Activated CD4-positive, alpha-beta T cell treated with anti-CD3 and anti-CD28 coated beads for 36 hours (primary cell): ENCODE measurements at regions of chr9 and their contacts with region 1.

Region 1: GRCh38 chr9:5628530-5629311 is at the start of gene RIC1:
- DNase-seq: peak; percentile 94
- ATAC-seq: peak; percentile 81
- H3K4me3 Mint-ChIP-seq: peak within 1 kb of the TSS; percentile 96
- H3K27ac Mint-ChIP-seq: peak within 1 kb of the TSS; percentile 99
- H3K4me1 Mint-ChIP-seq: peaks cover 61% of the 10 kb centered on the region
- H3K27me3 Mint-ChIP-seq: no peaks in the 10 kb centered on the region
- total RNA-seq, gene RIC1: 13.6 to 17.1 TPM

Region 2: DNA sequence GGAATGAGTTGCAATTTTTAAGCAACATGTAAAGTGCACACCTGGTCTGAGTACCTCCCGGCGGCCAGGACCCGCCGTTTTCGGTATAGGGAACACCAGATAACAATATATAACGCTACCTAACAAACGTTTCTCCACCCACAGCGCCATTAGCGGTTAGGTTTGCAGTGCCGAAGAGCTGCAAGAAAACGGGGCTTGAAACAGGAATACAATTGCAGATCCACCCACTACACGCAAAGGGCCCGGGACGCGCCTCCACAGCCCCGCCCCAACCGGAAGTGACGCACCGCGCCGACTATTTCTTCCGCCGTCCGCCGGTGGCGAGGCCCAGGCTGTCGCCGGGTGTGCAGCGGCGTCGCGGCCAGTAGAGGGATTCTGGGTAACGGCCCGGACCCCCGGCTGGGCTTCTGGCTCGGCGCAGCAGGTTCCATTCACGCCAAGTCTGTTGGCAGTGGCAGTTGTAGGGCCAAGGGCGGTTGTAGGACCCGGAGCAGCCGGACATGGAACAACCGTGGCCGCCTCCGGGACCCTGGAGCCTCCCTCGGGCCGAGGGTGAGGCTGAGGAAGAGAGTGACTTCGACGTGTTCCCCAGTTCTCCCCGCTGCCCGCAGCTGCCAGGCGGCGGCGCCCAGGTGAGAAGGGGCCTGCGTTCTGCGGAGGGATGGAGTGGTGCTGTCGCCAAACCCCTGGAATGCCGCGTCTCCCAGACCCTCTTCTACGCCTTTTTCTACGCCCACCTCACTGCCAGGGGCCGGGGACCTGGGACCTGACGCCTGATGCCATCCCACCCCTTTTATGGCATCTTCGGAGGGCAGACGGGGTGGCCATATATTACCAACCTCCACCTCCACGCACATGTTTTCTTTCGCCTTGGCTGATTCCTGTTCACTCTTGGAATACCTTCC is 949.2 kb before region 1 on chr9 and contains the start of gene CDC37L1:
- CTCF ChIA-PET with region 1: no interaction called
- POLR2A ChIA-PET with region 1: no interaction called
- intact Hi-C with region 1: loop called in 1 of 2 experiments (anchors 5 kb)
- DNase-seq: peak; percentile 99
- ATAC-seq: peak; percentile 95
- H3K4me3 Mint-ChIP-seq: no peak within 1 kb of the TSS
- H3K27ac Mint-ChIP-seq: no peak within 1 kb of the TSS
- H3K4me1 Mint-ChIP-seq: peaks cover 11% of the 10 kb centered on the region
- H3K27me3 Mint-ChIP-seq: no peaks in the 10 kb centered on the region
- total RNA-seq, gene CDC37L1: 8.0 to 9.8 TPM

Region 3: GRCh38 chr9:4984621-4985385 is 643.9 kb before region 1 on chr9 and contains the start of gene JAK2:
- CTCF ChIA-PET with region 1: no interaction called
- POLR2A ChIA-PET with region 1: no interaction called
- intact Hi-C with region 1: loop called in 1 of 2 experiments (anchors 5 kb)
- DNase-seq: peak; percentile 91
- ATAC-seq: peak; percentile 84
- H3K4me3 Mint-ChIP-seq: no peak within 1 kb of the TSS
- H3K27ac Mint-ChIP-seq: peak within 1 kb of the TSS; percentile 94
- H3K4me1 Mint-ChIP-seq: peaks cover 54% of the 10 kb centered on the region
- H3K27me3 Mint-ChIP-seq: no peaks in the 10 kb centered on the region
- total RNA-seq, gene JAK2: 19.4 to 19.5 TPM

Region 4: GRCh38 chr9:5459289-5459829 is 169.4 kb before region 1 on chr9:
- CTCF ChIA-PET with region 1: interaction called, 3 read pairs
- POLR2A ChIA-PET with region 1: interaction called, 4 read pairs
- intact Hi-C with region 1: loop called (anchors 2 kb)
- DNase-seq: peak; percentile 47
- ATAC-seq: peak; percentile 67
- H3K4me3 Mint-ChIP-seq: peak overlapping the region; percentile 68
- H3K27ac Mint-ChIP-seq: peak overlapping the region; percentile 89
- H3K4me1 Mint-ChIP-seq: peaks cover 80% of the 10 kb centered on the region
- H3K27me3 Mint-ChIP-seq: no peaks in the 10 kb centered on the region

Region 5: DNA sequence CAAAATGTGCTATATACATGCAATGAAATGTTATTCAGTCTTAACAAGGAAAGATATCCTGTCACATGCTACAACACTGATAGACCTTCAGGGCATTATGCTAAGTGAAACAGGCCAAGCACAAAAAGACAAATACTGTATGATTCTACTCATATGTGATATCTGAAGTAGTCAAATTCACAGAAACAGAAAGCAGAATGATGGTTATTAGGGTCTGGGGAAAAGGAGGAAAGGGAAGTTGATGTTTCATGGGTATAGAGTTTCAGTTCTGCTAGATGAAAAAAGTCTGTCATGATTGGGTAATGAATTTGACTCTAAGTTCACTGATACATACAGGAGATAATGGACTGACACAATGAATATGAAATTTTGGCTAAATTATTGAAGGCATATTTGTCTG is 11.0 kb before region 1 on chr9:
- CTCF ChIA-PET with region 1: interaction called, 3 read pairs
- POLR2A ChIA-PET with region 1: interaction called, 3 read pairs
- intact Hi-C with region 1: loop called in 1 of 2 experiments (anchors 1 kb)
- DNase-seq: no peak
- ATAC-seq: peak; percentile 86
- H3K4me3 Mint-ChIP-seq: no peak overlapping the region
- H3K27ac Mint-ChIP-seq: peak overlapping the region; percentile 14
- H3K4me1 Mint-ChIP-seq: peaks cover 31% of the 10 kb centered on the region
- H3K27me3 Mint-ChIP-seq: no peaks in the 10 kb centered on the region

Region 6: DNA sequence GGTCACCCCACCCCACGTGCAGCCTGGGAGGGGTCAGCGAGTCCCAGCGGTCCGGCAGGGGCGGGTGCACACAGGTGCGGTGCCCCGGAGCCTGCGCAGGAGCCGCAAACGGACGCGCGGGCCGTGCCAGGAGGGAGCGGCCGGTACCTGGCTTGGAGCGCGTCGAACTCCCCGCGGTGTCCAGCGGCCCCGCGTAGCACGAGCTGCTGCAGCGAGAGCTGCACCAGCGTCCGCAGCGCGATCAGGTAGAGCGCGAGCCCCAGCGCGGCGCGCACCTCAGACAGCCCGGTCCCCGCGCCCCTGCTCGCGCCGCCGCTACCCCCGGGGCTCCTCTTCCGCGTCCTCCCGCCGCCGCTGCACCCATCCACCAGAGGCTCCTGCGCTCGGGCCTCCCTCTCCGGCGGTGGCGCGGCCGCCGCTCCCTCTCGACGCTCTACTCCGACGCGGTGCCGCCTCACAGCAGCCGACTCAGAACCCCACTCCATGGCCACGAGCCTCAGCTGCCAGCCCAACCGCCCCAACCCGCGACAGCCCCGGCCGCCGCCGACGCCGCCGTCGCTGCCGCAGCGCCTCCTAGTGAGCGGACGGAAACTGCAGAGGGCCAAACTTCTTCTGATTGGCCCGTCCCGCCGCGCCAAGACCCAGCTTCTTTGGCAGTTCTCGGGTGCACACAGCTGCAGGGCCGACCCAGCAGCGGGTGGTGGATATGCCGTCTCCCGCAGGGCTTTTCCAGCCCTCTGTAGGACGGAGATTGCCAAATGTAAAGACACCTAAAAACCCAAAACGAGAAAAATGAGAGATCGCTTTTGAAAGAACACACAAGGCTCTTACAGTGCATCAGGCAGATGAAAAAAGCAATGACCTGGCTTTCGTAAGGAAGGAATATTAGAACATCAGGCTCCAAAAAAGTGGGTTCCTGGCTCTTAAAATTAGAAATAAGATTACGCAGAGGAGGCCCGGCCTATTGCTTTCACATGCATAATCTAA is 204.1 kb after region 1 on chr9 and contains the start of gene ERMP1:
- CTCF ChIA-PET with region 1: interaction called, 4 read pairs
- POLR2A ChIA-PET with region 1: no interaction called
- intact Hi-C with region 1: loop called (anchors 1 to 5 kb)
- DNase-seq: peak; percentile 94
- ATAC-seq: peak; percentile 88
- H3K4me3 Mint-ChIP-seq: peak within 1 kb of the TSS; percentile 91
- H3K27ac Mint-ChIP-seq: peak within 1 kb of the TSS; percentile 84
- H3K4me1 Mint-ChIP-seq: peaks cover 48% of the 10 kb centered on the region
- H3K27me3 Mint-ChIP-seq: no peaks in the 10 kb centered on the region
- total RNA-seq, gene ERMP1: 13.3 to 13.9 TPM

Region 7: DNA sequence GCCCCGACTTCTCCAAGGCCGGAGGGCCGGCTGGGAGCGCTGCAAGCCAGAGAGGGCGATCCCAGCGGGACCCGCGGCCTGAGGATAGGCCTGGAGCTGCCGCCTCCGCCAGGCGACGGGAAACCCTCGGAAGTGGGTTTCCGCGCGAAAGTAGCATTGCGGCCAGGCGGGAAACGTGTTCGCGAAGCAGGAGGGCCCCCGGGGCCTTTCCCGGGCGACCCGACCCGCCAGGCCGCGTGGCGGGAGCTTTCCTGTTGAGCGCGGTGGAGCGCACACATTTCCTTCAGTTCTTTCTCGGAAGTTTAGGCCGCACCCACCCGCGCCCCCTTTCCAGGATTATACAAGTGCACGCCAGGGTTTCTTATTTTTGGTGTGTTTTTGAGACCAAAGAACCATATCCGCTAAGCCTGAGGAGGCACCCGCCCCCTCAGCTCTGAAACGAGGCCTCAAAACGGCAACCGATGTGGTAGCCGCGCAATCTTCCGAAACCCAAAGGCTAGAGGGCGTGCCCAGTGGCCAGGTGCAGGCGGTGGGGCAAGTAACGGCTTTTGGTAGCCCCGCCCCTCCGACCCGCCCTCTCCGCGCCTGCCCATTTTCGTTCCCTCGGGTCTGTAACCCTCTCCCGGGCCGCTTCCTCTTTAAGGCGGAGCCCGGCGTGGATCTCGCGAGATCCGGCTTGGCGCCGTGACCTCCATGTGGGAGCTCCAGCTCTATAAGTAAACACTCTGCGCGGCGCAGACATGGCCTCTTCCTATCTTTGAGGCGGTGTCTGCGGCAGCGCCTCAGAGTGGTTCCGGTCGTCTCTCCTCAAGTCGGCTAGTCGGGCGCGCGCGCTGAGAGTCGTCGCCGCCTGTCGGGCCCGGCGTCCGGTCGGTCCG is 784.0 kb after region 1 on chr9 and contains the start of gene UHRF2:
- CTCF ChIA-PET with region 1: no interaction called
- POLR2A ChIA-PET with region 1: interaction called, 3 read pairs
- intact Hi-C with region 1: loop called in 1 of 2 experiments (anchors 1 kb)
- DNase-seq: peak; percentile 100
- ATAC-seq: peak; percentile 91
- H3K4me3 Mint-ChIP-seq: peak within 1 kb of the TSS; percentile 83
- H3K27ac Mint-ChIP-seq: peak within 1 kb of the TSS; percentile 93
- H3K4me1 Mint-ChIP-seq: peaks cover 32% of the 10 kb centered on the region
- H3K27me3 Mint-ChIP-seq: peaks cover 6% of the 10 kb centered on the region
- total RNA-seq, gene UHRF2: 63.7 to 70.9 TPM